ENCODE measurements at regions of chr18 and their contacts with region 1.

Region 1: GRCh38 chr18:47595815-47596496 is 334.5 kb downstream of the SMAD2 start:
- DNase-seq: peak; percentile 61
- H3K4me3 ChIP-seq: no peak overlapping the region
- H3K27ac ChIP-seq: no peak overlapping the region
- H3K4me1 ChIP-seq: no peaks in the 10 kb centered on the region
- H3K27me3 ChIP-seq: no peaks in the 10 kb centered on the region
- CTCF ChIP-seq: peak; percentile 55

Region 2: DNA sequence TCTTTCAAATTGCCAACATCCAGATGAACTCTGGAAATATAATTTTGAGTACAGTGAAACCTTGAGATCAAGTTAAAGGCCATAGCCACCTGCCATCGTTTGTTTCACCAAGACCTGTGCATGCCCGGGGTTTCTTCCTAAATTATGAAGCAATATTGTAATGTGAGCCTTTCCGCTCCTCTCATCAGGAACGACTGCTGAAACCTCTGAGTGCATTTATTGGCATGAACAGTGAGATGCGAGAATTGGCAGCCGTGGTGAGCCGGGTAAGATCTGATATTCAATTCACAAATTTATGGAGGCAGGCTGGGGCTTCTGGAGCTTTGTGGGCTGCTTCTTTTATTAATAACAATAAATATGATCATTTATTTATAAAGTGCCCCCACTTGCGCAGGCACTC is 532.9 kb before region 1 on chr18:
- intact Hi-C with region 1: no loop called
- DNase-seq: no peak
- H3K4me3 ChIP-seq: no peak overlapping the region
- H3K27ac ChIP-seq: no peak overlapping the region
- H3K4me1 ChIP-seq: no peaks in the 10 kb centered on the region
- H3K27me3 ChIP-seq: no peaks in the 10 kb centered on the region
- CTCF ChIP-seq: no peak

Region 3: GRCh38 chr18:47215554-47216138 is 380.3 kb before region 1 on chr18:
- intact Hi-C with region 1: loop called (anchors 10 kb)
- DNase-seq: no peak
- H3K4me3 ChIP-seq: no peak overlapping the region
- H3K27ac ChIP-seq: no peak overlapping the region
- H3K4me1 ChIP-seq: no peaks in the 10 kb centered on the region
- H3K27me3 ChIP-seq: no peaks in the 10 kb centered on the region
- CTCF ChIP-seq: peak; percentile 18

Region 4: GRCh38 chr18:47397671-47398319 is 198.2 kb before region 1 on chr18:
- intact Hi-C with region 1: loop called (anchors 5 kb)
- DNase-seq: peak; percentile 46
- H3K4me3 ChIP-seq: no peak overlapping the region
- H3K27ac ChIP-seq: no peak overlapping the region
- H3K4me1 ChIP-seq: no peaks in the 10 kb centered on the region
- H3K27me3 ChIP-seq: no peaks in the 10 kb centered on the region
- CTCF ChIP-seq: peak; percentile 42

Region 5: DNA sequence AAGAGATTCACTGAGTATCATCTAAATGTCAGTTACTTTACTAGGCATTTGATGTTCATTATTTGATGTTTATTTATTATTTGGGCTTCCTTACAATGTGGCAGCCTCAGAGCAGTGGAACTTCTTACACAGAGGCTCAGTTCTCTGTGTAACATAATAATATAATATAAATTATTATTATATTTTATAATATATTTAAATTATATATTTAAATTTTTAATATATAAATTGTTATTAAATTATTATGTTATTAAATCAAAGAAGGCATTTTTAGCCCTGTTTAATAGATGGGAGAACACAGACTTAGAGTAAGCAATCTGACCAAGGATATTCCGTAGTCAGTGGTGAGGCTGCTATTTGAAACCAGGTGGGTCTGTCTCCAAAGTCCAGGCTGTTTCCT is 29.1 kb before region 1 on chr18:
- intact Hi-C with region 1: no loop called
- DNase-seq: no peak
- H3K4me3 ChIP-seq: no peak overlapping the region
- H3K27ac ChIP-seq: no peak overlapping the region
- H3K4me1 ChIP-seq: no peaks in the 10 kb centered on the region
- H3K27me3 ChIP-seq: no peaks in the 10 kb centered on the region
- CTCF ChIP-seq: no peak

Region 6: DNA sequence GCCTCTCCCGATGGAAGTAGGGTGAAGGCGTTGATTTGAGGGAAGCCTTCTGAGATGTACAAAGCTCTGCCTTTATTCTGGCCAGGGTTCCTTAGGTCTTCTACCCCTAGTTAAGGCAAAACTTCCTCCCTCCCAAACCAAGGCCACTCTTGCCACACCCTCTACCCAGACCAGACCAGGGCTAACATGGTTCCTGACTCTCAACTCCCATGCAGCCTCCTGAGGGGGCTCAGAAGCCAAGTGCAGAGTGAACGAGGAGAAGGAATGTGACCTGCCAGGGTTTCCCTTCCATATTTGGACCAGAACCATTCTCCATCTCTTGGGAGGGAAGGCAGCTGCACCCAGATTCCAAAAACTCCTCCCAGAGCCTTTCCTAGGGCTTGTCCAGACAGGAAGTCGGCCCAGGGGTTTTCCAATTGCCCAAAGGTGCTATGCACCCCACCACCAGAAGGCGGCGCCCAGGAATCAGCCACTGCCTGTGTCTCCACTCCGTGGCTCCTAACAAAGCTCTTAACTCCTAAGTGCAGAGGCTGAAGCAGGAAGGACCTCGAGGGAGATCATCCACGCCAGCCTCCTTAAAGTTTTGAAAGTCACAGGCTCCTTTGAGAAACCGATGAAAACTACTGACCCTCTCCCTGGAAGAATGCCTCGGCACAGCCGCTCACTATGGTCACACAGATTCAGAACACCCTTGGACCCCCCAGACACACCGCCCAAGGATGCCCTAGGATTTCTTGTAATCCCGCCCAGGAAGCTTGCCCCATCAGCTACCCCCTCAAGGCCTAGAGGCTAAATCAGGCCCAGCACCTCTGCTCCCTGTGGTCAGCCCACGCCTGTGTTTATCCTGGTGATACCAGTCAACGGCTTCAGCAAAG is 176.7 kb after region 1 on chr18:
- intact Hi-C with region 1: no loop called
- DNase-seq: peak; percentile 81
- H3K4me3 ChIP-seq: no peak overlapping the region
- H3K27ac ChIP-seq: no peak overlapping the region
- H3K4me1 ChIP-seq: no peaks in the 10 kb centered on the region
- H3K27me3 ChIP-seq: no peaks in the 10 kb centered on the region
- CTCF ChIP-seq: peak; percentile 89

Measured in colonic mucosa (tissue), 4 donors.